ENCODE measurements at regions of chrX and their contacts with region 1.

Region 1: DNA sequence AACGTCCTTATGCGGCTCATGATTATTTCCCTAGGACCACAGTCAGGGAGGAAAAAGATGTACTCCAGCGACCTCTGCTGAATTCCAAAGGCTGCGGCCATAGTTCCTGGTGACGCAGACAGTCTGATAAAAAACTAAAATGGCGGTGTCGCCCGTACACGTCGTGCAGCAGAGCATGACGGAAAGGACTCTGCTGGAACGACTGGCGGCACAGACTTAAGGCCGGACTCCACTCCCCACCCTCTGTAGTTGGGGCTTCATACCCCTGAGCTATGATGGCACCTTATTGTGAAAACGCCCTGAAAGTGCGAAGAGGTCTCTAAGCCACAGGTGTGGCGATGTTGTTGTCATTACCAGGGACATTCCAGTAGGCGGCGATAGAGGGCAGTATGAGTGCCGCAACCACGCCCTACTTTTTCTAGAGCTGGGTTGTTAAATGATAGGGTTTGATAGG is 90.0 kb upstream of the EDA2R start:
- DNase-seq: peak; percentile 70
- ATAC-seq: peak; percentile 91
- H3K4me3 Mint-ChIP-seq: peak overlapping the region; percentile 77
- H3K27ac Mint-ChIP-seq: peak overlapping the region; percentile 92
- H3K4me1 Mint-ChIP-seq: no peaks in the 10 kb centered on the region
- H3K27me3 Mint-ChIP-seq: no peaks in the 10 kb centered on the region

Region 2: DNA sequence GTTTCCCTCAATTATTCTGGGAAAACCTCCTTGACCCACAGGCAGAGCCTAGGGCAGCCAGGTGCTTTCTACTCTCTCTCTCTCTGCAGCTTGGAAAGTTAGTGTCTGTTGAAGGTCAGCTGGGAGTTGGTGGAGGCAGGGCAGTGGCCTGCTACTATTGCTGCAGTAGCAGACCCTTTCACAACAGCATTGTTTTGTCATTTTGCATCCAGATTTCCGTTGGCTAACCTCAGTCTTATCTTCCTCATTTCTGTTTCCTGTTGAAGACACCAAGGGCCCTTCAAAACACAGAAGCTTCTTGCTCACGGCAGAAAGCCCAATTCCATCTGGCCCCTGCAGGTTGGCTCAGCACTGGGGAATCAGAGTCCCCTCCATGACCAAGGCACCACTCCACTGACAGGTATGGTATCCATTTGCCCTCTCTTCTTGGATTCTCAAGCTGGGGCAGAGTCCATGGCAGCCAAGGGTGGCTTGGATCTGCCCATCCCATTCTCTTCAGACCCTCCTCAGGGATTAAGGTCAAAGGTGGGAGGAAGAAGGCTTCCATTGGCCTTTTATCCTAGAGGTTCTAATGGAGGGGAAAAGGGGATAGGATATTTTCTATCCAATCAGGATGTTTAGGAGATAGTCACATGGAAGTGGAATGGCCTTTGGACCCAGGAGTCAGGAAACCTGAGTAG is 713.6 kb before region 1 on chrX:
- CTCF ChIA-PET with region 1: no interaction called
- POLR2A ChIA-PET with region 1: no interaction called
- intact Hi-C with region 1: loop called in 1 of 2 experiments (anchors 10 kb)
- DNase-seq: no peak
- ATAC-seq: no peak
- H3K4me3 Mint-ChIP-seq: no peak overlapping the region
- H3K27ac Mint-ChIP-seq: no peak overlapping the region
- H3K4me1 Mint-ChIP-seq: peaks cover 69% of the 10 kb centered on the region
- H3K27me3 Mint-ChIP-seq: no peaks in the 10 kb centered on the region

Region 3: DNA sequence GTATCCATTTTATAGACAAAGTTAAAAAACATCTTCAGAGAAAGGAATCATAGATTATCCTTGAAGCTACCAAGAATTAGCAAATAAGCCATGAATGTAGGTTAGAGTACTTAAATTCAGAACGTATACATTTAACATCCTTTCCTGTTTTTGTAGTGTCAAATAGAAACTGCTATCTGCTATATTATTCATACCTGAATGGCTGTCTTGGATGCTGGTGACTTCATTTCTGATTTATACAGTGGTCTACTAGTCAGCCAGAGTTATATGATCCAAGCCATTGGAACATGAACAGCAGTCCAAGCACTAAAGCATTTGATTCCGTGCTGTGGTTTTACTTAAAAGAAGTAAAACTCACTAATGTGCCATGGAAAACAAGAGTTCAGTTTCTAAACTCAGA is 630.7 kb before region 1 on chrX:
- CTCF ChIA-PET with region 1: no interaction called
- POLR2A ChIA-PET with region 1: no interaction called
- intact Hi-C with region 1: no loop called
- DNase-seq: no peak
- ATAC-seq: no peak
- H3K4me3 Mint-ChIP-seq: no peak overlapping the region
- H3K27ac Mint-ChIP-seq: no peak overlapping the region
- H3K4me1 Mint-ChIP-seq: no peaks in the 10 kb centered on the region
- H3K27me3 Mint-ChIP-seq: no peaks in the 10 kb centered on the region

Region 4: GRCh38 chrX:66200855-66201795 is 527.7 kb before region 1 on chrX:
- CTCF ChIA-PET with region 1: interaction called, 6 read pairs
- POLR2A ChIA-PET with region 1: no interaction called
- intact Hi-C with region 1: loop called (anchors 2 to 10 kb)
- DNase-seq: no peak
- ATAC-seq: no peak
- H3K4me3 Mint-ChIP-seq: no peak overlapping the region
- H3K27ac Mint-ChIP-seq: peak overlapping the region; percentile 63
- H3K4me1 Mint-ChIP-seq: peaks cover 20% of the 10 kb centered on the region
- H3K27me3 Mint-ChIP-seq: no peaks in the 10 kb centered on the region

Region 5: GRCh38 chrX:66914080-66914479 is 185.2 kb after region 1 on chrX:
- CTCF ChIA-PET with region 1: no interaction called
- POLR2A ChIA-PET with region 1: no interaction called
- intact Hi-C with region 1: no loop called
- DNase-seq: no peak
- ATAC-seq: no peak
- H3K4me3 Mint-ChIP-seq: no peak overlapping the region
- H3K27ac Mint-ChIP-seq: no peak overlapping the region
- H3K4me1 Mint-ChIP-seq: no peaks in the 10 kb centered on the region
- H3K27me3 Mint-ChIP-seq: no peaks in the 10 kb centered on the region

Measured in activated CD4-positive, alpha-beta T cell treated with anti-CD3 and anti-CD28 coated beads for 36 hours (primary cell).